Natural killer cell (primary cell): ENCODE measurements at regions of chr11 and their contacts with region 1.

Region 1: GRCh38 chr11:124953753-124954589 is at the start of gene CCDC15:
- DNase-seq: peak; percentile 91 to 98
- ATAC-seq: peak; percentile 99
- H3K4me3 ChIP-seq: peak within 1 kb of the TSS; percentile 68
- H3K4me3 Mint-ChIP-seq: no peak within 1 kb of the TSS
- H3K27ac ChIP-seq: peak within 1 kb of the TSS; percentile 80
- H3K27ac Mint-ChIP-seq: no peak within 1 kb of the TSS
- H3K4me1 ChIP-seq: peaks cover 32% of the 10 kb centered on the region
- H3K4me1 Mint-ChIP-seq: no peaks in the 10 kb centered on the region
- H3K27me3 ChIP-seq: no peaks in the 10 kb centered on the region
- H3K27me3 Mint-ChIP-seq: no peaks in the 10 kb centered on the region
- CTCF ChIP-seq: no peak
- total RNA-seq, gene CCDC15: 3.8 to 4.7 (median 3.9) TPM

Region 2: GRCh38 chr11:124875943-124876817 is 77.8 kb before region 1 on chr11:
- intact Hi-C with region 1: loop called (anchors 5 kb)
- DNase-seq: peak; percentile 77 to 89
- ATAC-seq: peak; percentile 92
- H3K4me3 ChIP-seq: peak overlapping the region; percentile 74
- H3K4me3 Mint-ChIP-seq: peak overlapping the region; percentile 90
- H3K27ac ChIP-seq: peak overlapping the region; percentile 85
- H3K27ac Mint-ChIP-seq: peak overlapping the region; percentile 53 to 92
- H3K4me1 ChIP-seq: peaks cover 19% of the 10 kb centered on the region
- H3K4me1 Mint-ChIP-seq: peaks cover 16 to 54% of the 10 kb centered on the region in 2 donors
- H3K27me3 ChIP-seq: peaks cover 6% of the 10 kb centered on the region
- H3K27me3 Mint-ChIP-seq: peaks cover 27 to 30% of the 10 kb centered on the region in 2 donors
- CTCF ChIP-seq: peak; percentile 76

Region 3: DNA sequence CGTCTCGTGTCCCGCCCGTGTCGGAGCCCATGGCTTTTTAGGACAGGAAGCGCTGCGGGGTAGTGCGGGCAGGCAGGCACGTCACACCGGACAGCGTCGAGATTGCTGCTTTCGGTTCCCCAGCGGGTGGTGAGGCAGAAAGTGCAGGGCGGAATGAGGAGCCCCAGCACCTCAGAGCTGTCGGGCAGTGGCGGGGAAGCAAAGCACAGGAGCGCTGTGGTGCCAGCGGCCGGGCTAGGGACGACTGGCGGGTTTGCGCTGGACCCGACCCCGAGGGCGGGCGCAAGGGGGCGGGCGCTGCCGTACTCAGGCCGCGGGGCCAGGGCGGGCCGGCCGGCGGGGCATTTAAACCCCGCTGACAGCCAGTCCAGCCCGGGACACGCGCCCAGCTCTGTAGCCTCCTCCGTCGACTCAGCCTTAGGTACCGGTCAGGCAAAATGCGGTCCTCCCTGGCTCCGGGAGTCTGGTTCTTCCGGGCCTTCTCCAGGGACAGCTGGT is 109.0 kb after region 1 on chr11 and contains the start of gene SLC37A2:
- intact Hi-C with region 1: loop called (anchors 2 kb)
- DNase-seq: peak; percentile 60 to 66
- ATAC-seq: peak; percentile 88 to 90 (median 90)
- H3K4me3 ChIP-seq: peak within 1 kb of the TSS; percentile 55
- H3K4me3 Mint-ChIP-seq: peak within 1 kb of the TSS; percentile 90
- H3K27ac ChIP-seq: peak within 1 kb of the TSS; percentile 49
- H3K27ac Mint-ChIP-seq: peak within 1 kb of the TSS; percentile 70 to 86
- H3K4me1 ChIP-seq: peaks cover 13% of the 10 kb centered on the region
- H3K4me1 Mint-ChIP-seq: peaks cover 0 to 10% of the 10 kb centered on the region in 2 donors
- H3K27me3 ChIP-seq: no peaks in the 10 kb centered on the region
- H3K27me3 Mint-ChIP-seq: peaks cover 4 to 5% of the 10 kb centered on the region in 2 donors
- CTCF ChIP-seq: no peak
- total RNA-seq, gene SLC37A2: 1.0 to 3.2 (median 1.8) TPM

Region 4: DNA sequence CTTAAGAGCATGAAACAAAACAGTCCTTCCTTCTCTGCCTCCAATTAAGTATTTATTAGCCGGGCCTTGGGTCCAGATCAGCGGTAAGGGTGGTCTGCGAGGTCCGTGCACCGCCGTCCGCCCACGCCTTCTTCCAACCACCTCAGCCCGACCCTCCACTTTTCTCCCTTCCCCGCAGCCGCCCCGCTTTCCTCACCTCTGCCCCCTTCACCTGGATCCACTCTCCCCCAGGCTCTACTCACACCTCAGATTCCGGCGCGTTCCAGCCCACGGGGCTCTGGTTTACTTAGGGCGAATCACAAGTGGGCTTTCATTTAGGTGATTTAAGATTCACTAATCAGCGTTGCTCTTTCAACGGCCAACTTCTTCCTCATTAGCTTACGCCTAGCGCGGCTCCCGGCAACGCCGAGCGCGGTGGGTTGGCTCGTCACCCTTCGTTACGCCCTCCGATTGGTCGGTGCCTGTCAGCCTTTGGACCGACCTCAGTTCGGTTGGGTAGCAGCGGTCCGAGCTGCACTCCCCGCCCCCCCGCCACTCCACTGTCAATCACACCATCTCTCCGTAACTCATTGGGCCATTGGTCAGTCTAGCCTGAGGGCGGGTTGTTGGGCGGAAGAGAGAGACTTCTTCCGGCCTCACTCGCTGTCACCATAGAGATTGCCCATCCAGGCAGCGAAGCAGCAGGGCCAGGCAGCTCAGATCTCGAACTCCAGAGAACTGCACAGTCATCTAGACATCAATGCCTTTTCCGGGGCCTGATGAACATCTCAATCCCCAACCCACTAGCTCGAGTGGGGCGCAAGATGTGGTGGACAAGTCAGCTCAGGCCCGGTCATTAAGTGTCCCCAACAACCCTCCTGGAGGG is 157.6 kb after region 1 on chr11 and contains the start of gene TMEM218:
- intact Hi-C with region 1: loop called (anchors 1 kb)
- DNase-seq: peak; percentile 90 to 98
- ATAC-seq: peak; percentile 92 to 98 (median 95)
- H3K4me3 ChIP-seq: peak within 1 kb of the TSS; percentile 82
- H3K4me3 Mint-ChIP-seq: peak within 1 kb of the TSS; percentile 99
- H3K27ac ChIP-seq: peak within 1 kb of the TSS; percentile 84
- H3K27ac Mint-ChIP-seq: peak within 1 kb of the TSS; percentile 95 to 99
- H3K4me1 ChIP-seq: peaks cover 14% of the 10 kb centered on the region
- H3K4me1 Mint-ChIP-seq: peaks cover 17 to 23% of the 10 kb centered on the region in 2 donors
- H3K27me3 ChIP-seq: no peaks in the 10 kb centered on the region
- H3K27me3 Mint-ChIP-seq: peaks cover 0 to 9% of the 10 kb centered on the region in 2 donors
- CTCF ChIP-seq: no peak
- total RNA-seq, gene TMEM218: 10.0 to 14.2 (median 12.1) TPM

Region 5: GRCh38 chr11:125625630-125626287 is 671.8 kb after region 1 on chr11:
- intact Hi-C with region 1: loop called (anchors 5 kb)
- DNase-seq: peak; percentile 80 to 89
- ATAC-seq: peak; percentile 95 to 96 (median 96)
- H3K4me3 ChIP-seq: peak overlapping the region; percentile 93
- H3K4me3 Mint-ChIP-seq: peak overlapping the region; percentile 97
- H3K27ac ChIP-seq: peak overlapping the region; percentile 98
- H3K27ac Mint-ChIP-seq: peak overlapping the region; percentile 97 to 98
- H3K4me1 ChIP-seq: peaks cover 18% of the 10 kb centered on the region
- H3K4me1 Mint-ChIP-seq: peaks cover 19 to 20% of the 10 kb centered on the region in 2 donors
- H3K27me3 ChIP-seq: no peaks in the 10 kb centered on the region
- H3K27me3 Mint-ChIP-seq: no peaks in the 10 kb centered on the region
- CTCF ChIP-seq: no peak

Region 6: GRCh38 chr11:125887373-125888324 is 933.7 kb after region 1 on chr11 and contains the start of gene HYLS1:
- intact Hi-C with region 1: loop called (anchors 5 kb)
- DNase-seq: peak; percentile 98
- ATAC-seq: peak; percentile 75 to 91 (median 85)
- H3K4me3 ChIP-seq: peak within 1 kb of the TSS; percentile 90
- H3K4me3 Mint-ChIP-seq: peak within 1 kb of the TSS; percentile 96
- H3K27ac ChIP-seq: peak within 1 kb of the TSS; percentile 95
- H3K27ac Mint-ChIP-seq: peak within 1 kb of the TSS; percentile 94 to 97
- H3K4me1 ChIP-seq: peaks cover 15% of the 10 kb centered on the region
- H3K4me1 Mint-ChIP-seq: peaks cover 17 to 22% of the 10 kb centered on the region in 2 donors
- H3K27me3 ChIP-seq: no peaks in the 10 kb centered on the region
- H3K27me3 Mint-ChIP-seq: peaks cover 0 to 4% of the 10 kb centered on the region in 2 donors
- CTCF ChIP-seq: no peak
- total RNA-seq, gene HYLS1: 4.4 to 6.8 (median 5.6) TPM